AG04450 (cell line): ENCODE measurements at regions of chr4 and their contacts with region 1.

Region 1: GRCh38 chr4:124334119-124334518 is 378.4 kb downstream of the ANKRD50 start:
- DNase-seq: peak; percentile 66
- H3K4me3 ChIP-seq: no peak overlapping the region
- H3K27ac ChIP-seq: no peak overlapping the region
- H3K27me3 ChIP-seq: no peaks in the 10 kb centered on the region
- CTCF ChIP-seq: peak; percentile 66

Region 2: DNA sequence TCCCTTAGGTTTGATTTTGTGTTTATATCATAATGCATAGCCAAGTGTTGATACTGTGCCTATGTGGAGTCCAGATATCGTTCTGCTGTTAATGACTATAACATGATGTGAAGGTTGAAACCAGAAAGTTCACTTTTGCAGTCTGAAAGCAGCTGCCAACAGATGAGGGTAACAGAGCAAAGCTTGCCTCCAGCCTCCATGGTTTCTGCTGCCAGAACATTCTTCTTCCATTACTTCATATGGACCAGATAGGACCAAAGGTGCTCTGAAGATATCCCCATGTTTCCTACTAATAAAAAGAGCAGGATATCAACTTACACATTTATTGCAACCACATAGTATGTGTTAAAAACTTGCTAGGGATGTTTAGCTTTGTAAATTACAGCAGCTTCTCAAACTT is 543.4 kb before region 1 on chr4:
- CTCF ChIA-PET with region 1: no interaction called
- POLR2A ChIA-PET with region 1: no interaction called
- DNase-seq: no peak
- H3K4me3 ChIP-seq: no peak overlapping the region
- H3K27ac ChIP-seq: no peak overlapping the region
- H3K27me3 ChIP-seq: no peaks in the 10 kb centered on the region
- CTCF ChIP-seq: no peak

Region 3: GRCh38 chr4:124322234-124323065 is 11.7 kb before region 1 on chr4:
- CTCF ChIA-PET with region 1: interaction called, 12 read pairs
- POLR2A ChIA-PET with region 1: no interaction called
- DNase-seq: no peak
- H3K4me3 ChIP-seq: no peak overlapping the region
- H3K27ac ChIP-seq: no peak overlapping the region
- H3K27me3 ChIP-seq: peaks cover 3% of the 10 kb centered on the region
- CTCF ChIP-seq: peak; percentile 54

Region 4: DNA sequence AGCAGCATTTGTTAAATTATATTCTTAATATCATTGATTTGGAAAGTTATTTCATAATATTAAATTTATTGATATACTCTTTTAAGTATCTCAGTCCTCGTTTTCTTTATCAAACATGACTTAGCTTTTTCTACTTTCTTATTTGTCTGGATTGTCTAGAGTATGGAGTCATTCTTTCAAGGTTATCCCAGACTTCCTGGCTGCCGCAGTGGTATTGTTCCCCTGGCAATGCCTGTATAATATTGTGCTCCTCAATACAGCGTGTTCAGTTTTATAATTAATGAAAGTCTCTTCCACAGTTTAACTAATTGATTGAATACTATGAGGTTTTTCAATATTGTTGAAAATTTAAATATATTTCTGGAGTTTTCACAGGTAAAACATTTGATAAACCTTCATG is 67.5 kb after region 1 on chr4:
- CTCF ChIA-PET with region 1: no interaction called
- POLR2A ChIA-PET with region 1: no interaction called
- DNase-seq: no peak
- H3K4me3 ChIP-seq: no peak overlapping the region
- H3K27ac ChIP-seq: no peak overlapping the region
- H3K27me3 ChIP-seq: no peaks in the 10 kb centered on the region
- CTCF ChIP-seq: no peak

Region 5: GRCh38 chr4:124526331-124526730 is 192.2 kb after region 1 on chr4:
- CTCF ChIA-PET with region 1: interaction called, 11 read pairs
- POLR2A ChIA-PET with region 1: no interaction called
- DNase-seq: no peak
- H3K4me3 ChIP-seq: no peak overlapping the region
- H3K27ac ChIP-seq: peak overlapping the region; percentile 40
- H3K27me3 ChIP-seq: no peaks in the 10 kb centered on the region
- CTCF ChIP-seq: no peak

Region 6: GRCh38 chr4:124711471-124712371 is 377.6 kb after region 1 on chr4:
- CTCF ChIA-PET with region 1: interaction called, 12 read pairs
- POLR2A ChIA-PET with region 1: interaction called, 3 read pairs
- DNase-seq: peak; percentile 32
- H3K4me3 ChIP-seq: peak overlapping the region; percentile 87
- H3K27ac ChIP-seq: peak overlapping the region; percentile 90
- H3K27me3 ChIP-seq: no peaks in the 10 kb centered on the region
- CTCF ChIP-seq: peak; percentile 32

Region 7: DNA sequence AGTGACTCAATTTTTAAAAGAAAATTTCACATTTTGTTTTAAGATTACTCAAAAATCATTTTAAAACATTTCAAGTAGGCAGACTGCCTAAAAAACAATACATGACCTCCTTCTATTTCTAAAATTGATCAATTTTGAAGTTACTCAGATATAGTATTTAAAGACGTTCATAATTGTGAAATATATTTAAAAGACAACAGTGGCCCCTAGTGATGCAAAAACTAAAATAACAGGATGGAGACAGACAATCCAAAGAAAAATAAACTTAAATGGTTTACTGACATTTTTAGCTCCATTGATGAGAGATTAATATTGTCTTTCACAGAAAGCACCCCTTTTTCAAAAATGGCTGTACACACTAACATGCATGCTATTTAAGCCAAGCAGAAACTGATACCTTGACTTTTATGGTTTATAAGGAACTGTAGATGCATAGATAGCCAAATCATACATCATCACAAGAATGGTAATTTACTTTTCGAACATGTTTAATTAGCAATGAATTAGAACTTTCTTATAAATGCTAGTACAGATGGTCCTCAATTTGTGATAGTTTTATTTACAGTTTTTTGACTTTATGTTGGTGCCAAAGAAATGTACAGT is 910.8 kb after region 1 on chr4:
- CTCF ChIA-PET with region 1: interaction called, 35 read pairs
- POLR2A ChIA-PET with region 1: no interaction called
- DNase-seq: no peak
- H3K4me3 ChIP-seq: no peak overlapping the region
- H3K27ac ChIP-seq: no peak overlapping the region
- H3K27me3 ChIP-seq: no peaks in the 10 kb centered on the region
- CTCF ChIP-seq: peak; percentile 43

Region 8: DNA sequence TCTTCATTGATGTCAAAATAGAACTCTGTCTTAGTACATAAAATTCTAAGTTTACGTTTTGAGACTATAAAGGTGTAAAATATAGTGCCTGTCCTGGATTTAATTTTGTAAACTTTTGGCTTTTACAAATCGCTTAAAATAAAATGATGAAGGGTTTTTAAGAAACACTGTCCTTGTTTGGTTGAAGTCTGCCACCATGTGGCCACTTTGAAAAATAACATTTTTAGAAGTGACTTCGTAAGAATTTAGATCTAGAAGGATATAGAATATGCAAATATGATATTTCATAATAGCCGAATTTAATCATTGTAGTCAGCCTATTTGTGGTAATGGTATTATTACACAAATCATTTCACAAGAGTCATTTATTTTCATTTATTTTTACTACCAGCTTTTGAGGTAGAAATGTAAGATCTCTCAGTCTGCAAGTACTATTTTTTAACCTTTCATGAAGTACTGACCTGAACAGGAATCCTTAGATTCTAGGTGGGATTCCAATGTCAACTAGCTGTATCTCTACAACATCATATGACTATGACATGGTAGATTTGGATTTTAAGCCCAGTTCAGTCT is 949.7 kb after region 1 on chr4:
- CTCF ChIA-PET with region 1: interaction called, 81 read pairs
- POLR2A ChIA-PET with region 1: no interaction called
- DNase-seq: no peak
- H3K4me3 ChIP-seq: no peak overlapping the region
- H3K27ac ChIP-seq: no peak overlapping the region
- H3K27me3 ChIP-seq: no peaks in the 10 kb centered on the region
- CTCF ChIP-seq: peak; percentile 51